Activated CD4-positive, alpha-beta memory T cell treated with anti-CD3 and anti-CD28 coated beads, Interleukin-2, amount 10 ng/mL, durations not matched to agents 7 days and 5 days (primary cell): ENCODE measurements at regions of chr1 and their contacts with region 1.

Region 1: GRCh38 chr1:145858894-145859490 is at the start of gene PIAS3:
- DNase-seq: peak; percentile 90
- H3K4me3 Mint-ChIP-seq: peak within 1 kb of the TSS; percentile 97
- H3K27ac Mint-ChIP-seq: peak within 1 kb of the TSS; percentile 76
- H3K4me1 Mint-ChIP-seq: peaks cover 16% of the 10 kb centered on the region
- H3K27me3 Mint-ChIP-seq: peaks cover 12% of the 10 kb centered on the region
- total RNA-seq, gene PIAS3: 21.2 to 21.7 TPM

Region 2: DNA sequence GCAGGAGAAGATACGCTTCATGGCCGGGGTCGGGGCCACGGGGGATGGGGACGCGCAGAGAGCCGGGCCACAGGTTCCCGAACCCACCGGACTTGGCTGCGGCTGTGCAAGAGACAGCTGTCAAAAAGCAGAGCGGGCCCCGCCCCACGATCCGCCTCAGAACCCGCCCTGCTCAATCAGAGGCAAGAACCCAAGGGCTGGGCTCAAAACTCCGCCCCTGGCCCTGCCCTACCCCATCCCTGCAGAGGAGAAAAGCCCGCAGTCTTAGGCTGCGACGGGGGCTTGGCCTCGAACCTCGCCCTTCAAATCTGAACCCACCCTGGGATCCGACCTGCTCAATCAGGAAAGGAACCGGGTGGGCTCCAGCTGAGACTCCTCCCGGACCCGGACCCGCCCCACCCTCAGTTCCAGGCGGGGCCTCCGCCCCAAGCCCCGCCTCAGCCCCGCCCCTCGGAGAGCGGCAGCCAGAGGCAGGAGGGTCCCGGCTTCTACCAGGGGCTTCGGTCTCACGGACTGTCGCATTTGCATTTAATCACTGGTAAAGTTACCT is 26.8 kb after region 1 on chr1 and contains the start of gene ANKRD35:
- CTCF ChIA-PET with region 1: interaction called, 8 read pairs
- POLR2A ChIA-PET with region 1: interaction called, 11 read pairs
- DNase-seq: peak; percentile 91
- H3K4me3 Mint-ChIP-seq: peak within 1 kb of the TSS; percentile 75
- H3K27ac Mint-ChIP-seq: no peak within 1 kb of the TSS
- H3K4me1 Mint-ChIP-seq: peaks cover 17% of the 10 kb centered on the region
- H3K27me3 Mint-ChIP-seq: peaks cover 33% of the 10 kb centered on the region
- total RNA-seq, gene ANKRD35: 0.33 to 0.35 TPM

Region 3: DNA sequence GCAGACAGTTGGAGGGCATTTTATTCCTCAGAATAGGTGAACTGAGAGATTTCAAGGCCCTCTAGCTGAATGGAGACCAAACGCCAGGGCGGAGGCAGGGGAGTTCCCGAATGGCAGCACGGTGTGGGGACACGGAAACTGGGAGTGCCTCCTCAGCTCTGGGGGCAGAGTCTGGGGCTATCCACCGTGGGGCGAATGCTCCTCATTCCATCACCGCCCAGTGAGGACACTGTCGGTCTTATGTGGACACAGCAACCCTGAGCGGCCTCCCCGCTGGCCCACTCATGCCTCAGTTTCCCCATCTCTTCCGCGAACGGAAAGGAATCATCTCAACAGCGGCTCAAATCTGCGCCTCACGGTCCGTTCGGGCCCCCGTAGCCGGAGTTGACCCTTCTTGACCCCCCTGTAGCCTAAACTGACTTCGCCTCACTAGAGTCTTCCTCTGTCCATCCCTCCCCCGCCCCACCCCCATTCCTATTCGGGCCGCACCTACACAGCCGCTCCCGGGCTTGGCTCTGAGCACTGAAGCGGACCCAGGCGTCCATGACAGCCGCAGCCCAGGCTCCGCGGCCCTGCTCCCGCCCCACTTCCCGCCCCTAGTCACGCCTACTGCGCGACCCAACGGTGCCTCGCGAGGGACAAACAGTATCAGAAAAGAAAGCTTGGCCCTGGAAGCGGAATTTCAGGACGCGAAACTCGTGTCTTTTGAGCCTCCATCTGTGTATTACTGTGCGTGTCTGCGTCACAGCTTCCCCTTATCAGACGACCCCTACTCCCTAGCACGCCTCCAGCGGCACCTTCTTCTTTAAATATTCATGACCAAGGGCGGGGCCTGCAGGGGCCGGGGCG is 59.4 kb after region 1 on chr1 and contains the start of gene PEX11B:
- CTCF ChIA-PET with region 1: interaction called, 3 read pairs
- POLR2A ChIA-PET with region 1: interaction called, 12 read pairs
- DNase-seq: peak; percentile 92
- H3K4me3 Mint-ChIP-seq: peak within 1 kb of the TSS; percentile 90
- H3K27ac Mint-ChIP-seq: peak within 1 kb of the TSS; percentile 94
- H3K4me1 Mint-ChIP-seq: peaks cover 47% of the 10 kb centered on the region
- H3K27me3 Mint-ChIP-seq: no peaks in the 10 kb centered on the region
- total RNA-seq, gene PEX11B: 29.0 to 33.2 TPM

Region 4: DNA sequence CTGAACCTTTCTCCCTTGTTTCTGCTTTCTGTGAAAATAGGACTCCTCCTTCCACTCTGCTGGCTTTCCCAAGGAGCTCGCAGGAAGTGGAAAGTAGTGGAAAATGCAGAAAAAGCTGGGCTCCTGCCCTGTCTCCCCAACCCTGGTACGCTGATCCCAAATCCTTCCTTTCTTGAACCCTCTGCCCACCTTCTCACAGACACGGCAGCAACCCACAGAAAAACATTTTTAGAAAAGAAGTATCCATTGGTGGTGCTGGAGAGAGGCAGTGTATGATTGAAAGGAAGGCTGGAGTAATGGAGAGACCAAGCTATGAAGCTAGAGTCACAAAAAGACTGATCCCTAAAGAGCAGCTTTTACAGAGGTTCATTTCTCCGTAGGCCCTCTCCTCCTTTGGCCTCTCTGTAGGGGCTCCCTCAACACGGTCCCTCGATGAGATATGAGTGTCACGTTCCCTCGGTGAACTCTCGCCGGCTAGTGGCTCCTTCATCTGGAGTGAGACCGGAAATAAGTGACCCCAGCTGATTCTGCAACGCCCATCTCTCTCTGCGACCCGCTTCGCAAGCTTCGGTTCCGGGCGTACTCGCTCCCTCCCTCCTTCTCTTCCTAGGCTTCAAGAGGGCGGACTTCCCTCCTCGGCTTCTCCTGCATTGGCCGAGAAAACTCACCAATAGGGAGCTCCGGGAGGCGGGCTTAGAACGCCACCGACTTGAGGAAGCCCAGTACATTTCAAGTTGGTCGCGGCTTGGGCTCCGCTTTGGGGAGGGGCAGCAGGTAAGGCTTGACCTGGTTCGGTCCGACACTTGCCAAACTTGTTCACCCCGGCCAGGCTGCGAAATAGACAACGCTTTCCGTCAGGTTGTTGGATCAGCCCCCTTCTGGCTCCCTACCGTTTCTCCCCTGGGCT is 105.3 kb after region 1 on chr1 and contains the starts of genes ANKRD34A and POLR3GL:
- CTCF ChIA-PET with region 1: interaction called, 9 read pairs
- POLR2A ChIA-PET with region 1: interaction called, 18 read pairs
- DNase-seq: peak; percentile 95
- H3K4me3 Mint-ChIP-seq: peak within 1 kb of the TSS; percentile 96
- H3K27ac Mint-ChIP-seq: peak within 1 kb of the TSS; percentile 79
- H3K4me1 Mint-ChIP-seq: peaks cover 50% of the 10 kb centered on the region
- H3K27me3 Mint-ChIP-seq: peaks cover 5% of the 10 kb centered on the region
- total RNA-seq, gene ANKRD34A: 2.9 to 3.7 TPM
- total RNA-seq, gene POLR3GL: 32.4 to 33.7 TPM